Activated CD4-positive, alpha-beta memory T cell treated with anti-CD3 and anti-CD28 coated beads for 36 hours (primary cell): ENCODE measurements at regions of chr19 and their contacts with region 1.

Region 1: GRCh38 chr19:35545001-35545911 is at the start of gene TMEM147:
- DNase-seq: peak; percentile 90
- H3K4me3 Mint-ChIP-seq: peak within 1 kb of the TSS; percentile 93
- H3K27ac Mint-ChIP-seq: peak within 1 kb of the TSS; percentile 91
- H3K4me1 Mint-ChIP-seq: peaks cover 35% of the 10 kb centered on the region
- H3K27me3 Mint-ChIP-seq: no peaks in the 10 kb centered on the region
- total RNA-seq, gene TMEM147: 73.5 to 81.9 TPM

Region 2: GRCh38 chr19:35347171-35347929 is 197.9 kb before region 1 on chr19 and contains the start of gene FFAR1:
- CTCF ChIA-PET with region 1: no interaction called
- POLR2A ChIA-PET with region 1: no interaction called
- intact Hi-C with region 1: loop called (anchors 5 kb)
- DNase-seq: peak; percentile 82
- H3K4me3 Mint-ChIP-seq: peak within 1 kb of the TSS; percentile 63
- H3K27ac Mint-ChIP-seq: peak within 1 kb of the TSS; percentile 96
- H3K4me1 Mint-ChIP-seq: peaks cover 41% of the 10 kb centered on the region
- H3K27me3 Mint-ChIP-seq: peaks cover 4% of the 10 kb centered on the region
- total RNA-seq, gene FFAR1: 0.12 TPM in 1 of 2 experiments, not detected in the other

Region 3: GRCh38 chr19:35468637-35469036 is 76.6 kb before region 1 on chr19:
- CTCF ChIA-PET with region 1: no interaction called
- POLR2A ChIA-PET with region 1: no interaction called
- intact Hi-C with region 1: no loop called
- DNase-seq: peak; percentile 77
- H3K4me3 Mint-ChIP-seq: no peak overlapping the region
- H3K27ac Mint-ChIP-seq: peak overlapping the region; percentile 20
- H3K4me1 Mint-ChIP-seq: peaks cover 7% of the 10 kb centered on the region
- H3K27me3 Mint-ChIP-seq: no peaks in the 10 kb centered on the region

Region 4: DNA sequence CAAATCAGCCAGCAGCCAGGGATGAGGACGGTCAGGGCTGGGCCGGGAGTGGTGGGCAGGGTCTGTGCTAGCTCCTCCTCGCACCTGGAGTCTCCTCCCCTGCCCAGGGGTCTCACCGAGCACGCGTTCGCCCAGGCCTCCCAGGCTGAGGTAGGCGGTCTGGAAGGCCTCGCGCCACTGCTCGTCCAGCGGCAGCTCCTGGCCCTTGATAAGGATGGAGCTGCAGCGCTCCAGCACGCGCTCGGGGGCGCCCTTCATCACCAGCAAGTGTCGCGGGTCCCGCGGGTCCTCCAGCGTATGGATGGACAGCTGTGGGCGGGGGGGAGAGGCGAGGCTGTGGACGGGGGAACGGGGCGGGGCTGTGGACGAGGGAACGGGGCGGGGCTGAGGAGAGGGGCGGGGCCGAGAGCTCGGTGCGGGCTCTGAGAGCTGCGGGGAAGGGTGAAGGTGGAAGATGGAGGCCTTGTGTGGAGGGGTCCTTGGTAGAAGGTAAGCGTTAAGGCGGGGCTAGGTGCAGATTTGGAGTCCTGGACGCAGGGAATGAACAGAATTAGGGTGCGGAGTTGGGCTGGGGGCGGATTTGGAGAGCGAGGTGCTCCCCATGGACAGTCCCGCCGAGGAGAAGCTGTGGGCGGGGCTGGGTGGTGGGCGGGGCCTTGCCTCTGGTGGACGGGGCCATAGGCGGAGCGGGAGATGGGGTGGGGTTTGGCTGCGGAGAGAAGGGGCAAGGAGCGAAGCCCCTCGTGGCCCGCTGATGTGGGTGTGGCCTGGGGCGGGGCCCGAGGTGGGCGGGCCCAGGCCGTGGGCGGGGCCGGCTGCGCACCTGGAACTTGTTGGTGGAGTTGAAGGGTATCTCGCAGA is 12.5 kb after region 1 on chr19:
- CTCF ChIA-PET with region 1: interaction called, 31 read pairs
- POLR2A ChIA-PET with region 1: no interaction called
- intact Hi-C with region 1: no loop called
- DNase-seq: peak; percentile 64
- H3K4me3 Mint-ChIP-seq: peak overlapping the region; percentile 69
- H3K27ac Mint-ChIP-seq: no peak overlapping the region
- H3K4me1 Mint-ChIP-seq: peaks cover 9% of the 10 kb centered on the region
- H3K27me3 Mint-ChIP-seq: peaks cover 39% of the 10 kb centered on the region

Region 5: DNA sequence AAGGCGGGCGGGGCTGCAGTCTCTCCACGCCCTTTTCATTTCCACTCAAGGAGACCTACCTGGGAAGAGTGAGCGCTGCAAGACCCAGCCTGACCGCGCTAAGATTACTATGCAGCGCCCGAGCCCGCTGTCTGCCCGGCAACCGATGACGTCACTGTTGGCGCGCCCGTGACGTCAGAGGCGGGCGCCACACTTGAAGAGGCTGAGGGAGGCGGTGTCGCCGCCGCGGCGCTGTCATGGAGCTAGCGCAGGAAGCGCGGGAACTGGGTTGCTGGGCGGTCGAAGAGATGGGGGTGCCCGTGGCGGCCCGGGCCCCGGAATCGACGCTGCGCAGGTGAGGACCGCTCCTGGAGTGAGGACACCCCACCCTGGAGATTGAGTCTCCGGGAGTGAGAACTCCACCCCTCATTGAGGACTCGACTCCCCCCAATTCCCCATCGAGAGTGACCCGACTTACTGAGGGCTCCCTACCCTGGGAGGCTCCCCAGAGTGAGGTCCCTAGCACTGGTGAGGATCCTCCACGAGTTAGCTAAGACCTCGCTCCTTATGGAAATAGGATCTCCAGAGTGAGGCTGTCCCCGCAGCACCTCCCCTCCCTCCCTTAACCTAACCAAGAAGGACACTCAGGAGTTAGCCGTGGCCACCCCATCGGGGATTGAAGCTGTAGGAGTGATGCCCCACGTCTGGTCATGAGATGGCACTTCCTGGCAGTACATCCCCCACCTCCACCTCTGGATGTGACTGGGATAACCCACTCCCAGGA is 67.5 kb after region 1 on chr19 and contains the start of gene HAUS5:
- CTCF ChIA-PET with region 1: interaction called, 13 read pairs
- POLR2A ChIA-PET with region 1: no interaction called
- intact Hi-C with region 1: loop called (anchors 5 kb)
- DNase-seq: peak; percentile 98
- H3K4me3 Mint-ChIP-seq: peak within 1 kb of the TSS; percentile 83
- H3K27ac Mint-ChIP-seq: peak within 1 kb of the TSS; percentile 81
- H3K4me1 Mint-ChIP-seq: peaks cover 31% of the 10 kb centered on the region
- H3K27me3 Mint-ChIP-seq: peaks cover 1% of the 10 kb centered on the region
- total RNA-seq, gene HAUS5: 36.6 to 43.1 TPM

Region 6: DNA sequence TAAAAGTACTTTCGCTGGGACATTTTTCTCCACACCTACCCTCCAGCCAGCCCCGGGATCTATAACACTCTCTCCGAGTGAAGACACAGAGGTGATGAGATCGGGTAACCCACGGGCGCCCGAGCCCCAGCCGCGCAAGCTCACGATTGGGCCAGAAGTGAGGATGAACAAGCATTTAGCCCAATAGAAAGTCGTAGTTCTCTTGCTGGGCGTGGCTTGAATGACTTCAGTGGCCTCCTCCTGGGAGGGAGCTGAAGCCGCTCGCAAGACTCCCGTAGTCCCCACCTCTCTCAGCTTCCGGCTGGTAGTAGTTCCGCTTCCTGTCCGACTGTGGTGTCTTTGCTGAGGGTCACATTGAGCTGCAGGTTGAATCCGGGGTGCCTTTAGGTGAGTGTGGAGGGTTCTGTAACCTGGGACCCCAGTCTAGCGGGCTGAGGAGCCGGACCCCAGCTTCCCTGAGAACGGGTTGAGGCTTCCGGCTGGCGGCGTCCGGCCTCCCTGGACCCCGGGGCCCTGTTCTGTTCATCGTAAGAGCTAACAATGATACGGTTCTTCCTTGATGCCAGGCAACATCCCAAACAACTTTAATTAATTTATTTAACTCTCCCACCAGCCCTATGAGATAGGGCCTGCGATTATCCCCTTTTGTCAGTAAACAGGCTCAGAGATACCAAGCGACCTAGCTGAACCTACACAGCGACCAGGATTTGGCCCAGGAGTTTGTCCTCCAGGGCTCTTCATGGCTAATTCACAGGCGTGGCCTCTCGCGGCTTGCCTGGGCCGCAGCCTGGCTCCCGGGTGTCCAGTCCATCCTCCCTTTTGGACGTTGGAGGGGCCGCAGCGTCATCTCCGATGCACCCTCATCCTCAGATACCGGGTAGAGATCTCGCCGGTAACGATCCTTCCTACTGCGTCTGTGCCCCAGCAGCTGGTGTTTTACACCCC is 103.0 kb after region 1 on chr19 and contains the start of gene COX6B1:
- CTCF ChIA-PET with region 1: interaction called, 10 read pairs
- POLR2A ChIA-PET with region 1: no interaction called
- intact Hi-C with region 1: loop called (anchors 2 kb)
- DNase-seq: peak; percentile 96
- H3K4me3 Mint-ChIP-seq: peak within 1 kb of the TSS; percentile 97
- H3K27ac Mint-ChIP-seq: peak within 1 kb of the TSS; percentile 85
- H3K4me1 Mint-ChIP-seq: peaks cover 37% of the 10 kb centered on the region
- H3K27me3 Mint-ChIP-seq: no peaks in the 10 kb centered on the region
- total RNA-seq, gene COX6B1: 444 to 453 TPM

Region 7: GRCh38 chr19:35716801-35717666 is 171.8 kb after region 1 on chr19:
- CTCF ChIA-PET with region 1: no interaction called
- POLR2A ChIA-PET with region 1: no interaction called
- intact Hi-C with region 1: loop called (anchors 1 kb)
- DNase-seq: peak; percentile 97
- H3K4me3 Mint-ChIP-seq: peak overlapping the region; percentile 91
- H3K27ac Mint-ChIP-seq: peak overlapping the region; percentile 99
- H3K4me1 Mint-ChIP-seq: peaks cover 39% of the 10 kb centered on the region
- H3K27me3 Mint-ChIP-seq: peaks cover 1% of the 10 kb centered on the region